Activated CD8-positive, alpha-beta T cell treated with anti-CD3 and anti-CD28 coated beads, Interleukin-2, amount 10 ng/mL, durations not matched to agents 7 days and 5 days (primary cell): ENCODE measurements at regions of chr7 and their contacts with region 1.

Region 1: DNA sequence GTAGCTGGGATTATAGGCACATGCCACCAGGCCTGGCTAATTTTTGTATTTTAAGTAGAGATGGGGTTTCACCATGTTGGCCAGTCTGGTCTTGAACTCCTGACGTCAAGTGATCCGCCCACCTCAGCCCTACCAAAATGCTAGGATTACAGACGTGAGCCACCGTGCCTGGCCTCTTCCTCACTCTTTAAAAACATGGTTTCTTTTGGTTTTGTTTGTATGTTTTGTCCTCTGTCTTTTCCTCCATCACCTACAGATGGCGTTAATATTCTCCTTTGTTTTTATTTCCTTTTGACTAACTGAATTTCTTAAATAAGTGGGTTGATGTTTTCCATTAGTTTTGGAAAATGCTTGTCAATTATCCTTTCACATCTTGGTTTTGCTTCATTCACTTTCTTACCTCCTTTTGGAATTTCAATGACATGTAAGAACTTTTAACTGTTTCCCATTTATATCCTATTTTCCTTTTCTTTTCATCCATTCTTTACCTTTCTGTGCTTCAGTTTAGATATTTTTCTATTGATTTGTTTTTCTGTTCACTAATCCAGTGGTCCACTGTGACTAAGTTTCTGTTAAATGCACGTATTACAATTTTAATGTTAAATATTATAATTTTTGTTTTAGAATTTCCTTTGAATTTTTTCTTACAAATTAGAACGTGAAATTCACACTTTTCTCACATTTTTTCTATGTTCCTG is 104.1 kb downstream of the ZNF467 start:
- DNase-seq: no peak
- ATAC-seq: no peak
- H3K4me3 Mint-ChIP-seq: no peak overlapping the region
- H3K27ac Mint-ChIP-seq: no peak overlapping the region
- H3K4me1 Mint-ChIP-seq: peaks cover 3% of the 10 kb centered on the region
- H3K27me3 Mint-ChIP-seq: peaks cover 49% of the 10 kb centered on the region

Region 2: GRCh38 chr7:149742075-149742701 is 72.9 kb after region 1 on chr7:
- CTCF ChIA-PET with region 1: interaction called, 74 read pairs
- POLR2A ChIA-PET with region 1: no interaction called
- DNase-seq: peak; percentile 69
- ATAC-seq: peak; percentile 83
- H3K4me3 Mint-ChIP-seq: peak overlapping the region; percentile 27
- H3K27ac Mint-ChIP-seq: no peak overlapping the region
- H3K4me1 Mint-ChIP-seq: peaks cover 10% of the 10 kb centered on the region
- H3K27me3 Mint-ChIP-seq: peaks cover 42% of the 10 kb centered on the region